Activated CD4-positive, alpha-beta T cell treated with anti-CD3 and anti-CD28 coated beads, Interleukin-2, amount 10 ng/mL, durations not matched to agents 24 days and 14 days (primary cell): ENCODE measurements at regions of chr15 and their contacts with region 1.

Region 1: DNA sequence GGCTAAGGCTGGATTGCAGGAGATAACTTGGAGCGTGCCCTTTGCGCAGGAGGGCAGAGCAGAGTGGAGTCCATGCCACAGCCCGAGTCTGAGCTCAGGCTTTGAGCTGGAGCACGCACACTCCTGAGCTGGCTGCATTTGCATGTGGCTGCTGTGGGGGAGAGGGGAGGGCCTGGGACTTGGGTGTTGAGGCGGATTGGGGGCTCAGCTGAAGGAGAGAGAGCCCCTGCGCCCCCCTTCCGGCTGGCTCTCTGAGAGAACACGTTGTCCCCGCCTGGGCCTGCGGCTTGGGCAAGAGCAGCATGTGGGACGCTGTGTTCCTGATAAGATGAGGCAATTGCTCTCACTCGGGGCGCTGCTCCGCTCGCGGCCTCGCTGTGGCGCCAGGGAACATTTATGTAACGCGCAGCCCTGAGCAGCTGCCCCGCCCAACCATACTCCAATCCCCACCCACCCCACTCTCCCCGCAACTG is 39.1 kb downstream of the KLF13 start:
- DNase-seq: peak; percentile 93
- H3K4me3 Mint-ChIP-seq: peak overlapping the region; percentile 83
- H3K27ac Mint-ChIP-seq: peak overlapping the region; percentile 98
- H3K4me1 Mint-ChIP-seq: peaks cover 94% of the 10 kb centered on the region
- H3K27me3 Mint-ChIP-seq: no peaks in the 10 kb centered on the region

Region 2: DNA sequence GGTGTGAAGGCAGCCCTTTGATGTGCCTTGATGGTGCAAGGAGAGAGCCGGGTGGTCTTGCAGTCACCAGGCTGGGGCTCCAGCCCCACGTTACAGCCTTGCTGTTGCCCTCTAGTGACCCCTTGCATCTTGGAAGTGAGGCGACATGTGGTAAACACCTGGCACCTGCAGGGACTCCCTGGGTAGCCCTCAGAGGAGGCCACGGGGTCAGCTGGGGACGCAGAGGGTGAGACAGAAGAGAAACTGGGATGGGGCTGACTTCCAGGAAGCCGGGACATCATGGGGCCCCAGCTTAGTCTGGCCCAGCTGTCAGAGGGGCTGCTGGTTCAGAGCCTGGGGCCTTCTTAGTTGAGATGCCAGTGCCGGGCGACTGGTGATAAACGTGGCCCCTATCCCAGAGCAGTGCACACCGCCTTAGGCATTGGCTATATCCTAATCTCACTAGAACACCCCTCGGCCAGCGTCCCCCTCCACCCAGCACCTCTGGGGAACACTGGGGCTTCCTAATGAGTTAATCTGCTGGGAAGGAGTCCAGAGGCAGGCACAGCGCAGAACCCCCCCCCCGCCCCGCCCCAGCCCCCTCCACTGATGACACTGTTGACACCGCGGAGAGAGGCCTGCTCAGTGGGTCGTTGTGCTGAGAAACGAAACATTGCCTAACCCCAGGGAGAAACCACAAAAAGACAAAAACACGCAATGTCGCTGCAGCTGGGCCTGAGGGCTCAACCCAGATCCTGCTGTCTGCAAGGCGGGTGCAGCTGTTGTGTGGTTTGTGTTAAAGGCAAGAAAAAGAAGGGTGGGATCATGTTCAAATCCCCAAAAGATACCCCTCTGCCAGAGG is 99.6 kb before region 1 on chr15:
- intact Hi-C with region 1: loop called (anchors 10 kb)
- DNase-seq: peak; percentile 94
- H3K4me3 Mint-ChIP-seq: peak overlapping the region; percentile 68
- H3K27ac Mint-ChIP-seq: peak overlapping the region; percentile 78
- H3K4me1 Mint-ChIP-seq: peaks cover 87% of the 10 kb centered on the region
- H3K27me3 Mint-ChIP-seq: no peaks in the 10 kb centered on the region

Region 3: GRCh38 chr15:31344823-31345605 is 20.7 kb before region 1 on chr15:
- intact Hi-C with region 1: loop called (anchors 1 kb)
- DNase-seq: peak; percentile 76
- H3K4me3 Mint-ChIP-seq: peak overlapping the region; percentile 95
- H3K27ac Mint-ChIP-seq: peak overlapping the region; percentile 99
- H3K4me1 Mint-ChIP-seq: peaks cover 91% of the 10 kb centered on the region
- H3K27me3 Mint-ChIP-seq: no peaks in the 10 kb centered on the region

Region 4: GRCh38 chr15:31352911-31353811 is 12.5 kb before region 1 on chr15:
- intact Hi-C with region 1: loop called (anchors 1 kb)
- DNase-seq: peak; percentile 80
- H3K4me3 Mint-ChIP-seq: peak overlapping the region; percentile 86
- H3K27ac Mint-ChIP-seq: peak overlapping the region; percentile 87
- H3K4me1 Mint-ChIP-seq: peaks cover 87% of the 10 kb centered on the region
- H3K27me3 Mint-ChIP-seq: no peaks in the 10 kb centered on the region

Region 5: GRCh38 chr15:31391687-31392671 is 26.3 kb after region 1 on chr15:
- intact Hi-C with region 1: loop called (anchors 1 kb)
- DNase-seq: peak; percentile 96
- H3K4me3 Mint-ChIP-seq: peak overlapping the region; percentile 87
- H3K27ac Mint-ChIP-seq: peak overlapping the region; percentile 92
- H3K4me1 Mint-ChIP-seq: peaks cover 38% of the 10 kb centered on the region
- H3K27me3 Mint-ChIP-seq: no peaks in the 10 kb centered on the region